Heart left ventricle (tissue), 16 donors: ENCODE measurements at regions of chr2 and their contacts with region 1.

Region 1: DNA sequence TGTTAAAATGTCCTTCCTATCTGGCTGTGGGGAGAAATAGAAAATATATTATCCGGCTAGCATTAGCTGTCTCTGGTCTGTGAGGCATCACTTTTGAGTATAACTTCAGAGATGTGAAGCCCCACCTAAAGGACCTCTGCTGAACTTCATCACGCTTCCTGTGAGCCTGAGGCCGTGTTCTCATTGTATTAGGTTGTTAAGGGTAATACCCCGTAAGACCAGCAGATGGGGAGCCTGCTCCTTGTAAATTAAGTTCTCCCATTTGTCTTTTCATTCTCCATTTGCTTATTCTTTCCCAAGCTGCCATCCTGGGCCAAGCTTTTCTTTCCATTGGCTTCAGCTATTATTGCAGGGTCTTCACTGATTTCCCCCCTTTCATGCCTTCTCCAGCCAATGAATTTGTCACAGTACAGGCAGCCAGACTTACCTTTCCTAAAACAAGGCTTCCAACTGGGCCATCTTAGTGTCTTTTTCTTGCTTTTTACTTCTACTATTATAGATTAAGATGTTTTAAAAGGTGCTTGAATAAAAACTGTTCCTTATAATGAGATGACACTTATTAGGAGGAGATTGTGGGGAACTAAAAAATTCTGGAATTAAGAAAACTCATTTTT is 12.4 kb downstream of the NIF3L1 start:
- DNase-seq: peak in 3 of 5 donors; percentile 43 to 67 (median 56)
- ATAC-seq: peak; percentile 61 to 88 (median 84)
- H3K4me3 ChIP-seq: no peak overlapping the region
- H3K27ac ChIP-seq: peak overlapping the region in 1 of 12 donors; percentile 9
- H3K4me1 ChIP-seq: peaks cover 0 to 21% (median 2%) of the 10 kb centered on the region in 12 donors
- H3K27me3 ChIP-seq: no peaks in the 10 kb centered on the region
- CTCF ChIP-seq: peak; percentile 61 to 82 (median 76)
- POLR2A ChIP-seq: no peak

Region 2: DNA sequence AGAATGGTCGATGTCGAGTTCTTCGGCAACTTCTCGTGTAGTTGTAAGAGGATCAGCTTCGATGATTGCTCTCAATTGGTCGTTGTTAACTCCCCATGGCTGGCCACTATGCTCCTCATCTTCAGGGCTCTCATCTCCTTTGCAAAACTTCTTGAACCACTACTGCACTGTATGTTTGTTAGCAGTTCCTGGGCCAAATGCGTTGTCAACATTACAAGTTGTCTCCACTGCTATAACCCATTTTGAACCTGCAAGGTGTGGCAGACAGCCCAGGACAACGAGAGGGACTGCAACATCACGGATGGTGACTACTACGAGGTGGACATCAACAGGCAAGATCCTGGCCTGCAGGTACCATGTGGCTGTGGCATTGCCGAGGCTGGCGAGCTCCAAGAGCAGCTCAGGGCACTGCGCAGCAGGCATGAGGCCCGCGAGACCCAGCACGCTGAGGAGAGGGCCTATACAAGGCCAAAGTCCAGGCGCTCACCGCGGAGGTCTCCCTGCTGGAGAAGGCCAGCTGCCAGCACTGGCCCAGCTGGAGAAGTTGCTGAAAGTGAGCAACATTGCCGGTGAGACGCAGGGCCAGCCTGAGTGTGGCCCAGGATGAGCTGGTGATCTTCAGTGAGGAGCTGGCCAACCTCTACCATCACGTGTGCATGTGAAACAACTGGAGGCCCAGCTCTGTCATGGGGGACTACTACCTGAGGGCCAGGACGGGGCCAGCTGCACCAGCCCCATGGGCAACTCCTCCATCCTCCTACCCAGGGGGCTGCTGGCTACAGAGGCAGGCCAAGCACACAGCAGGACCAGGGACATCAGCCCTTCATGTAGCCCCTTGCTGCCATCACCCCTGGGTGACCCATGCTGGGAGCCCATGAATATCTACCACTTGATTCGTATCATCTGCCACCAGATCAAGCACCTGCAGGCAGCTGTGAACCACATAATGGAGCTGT is 57.3 kb before region 1 on chr2:
- intact Hi-C with region 1: no loop called
- DNase-seq: no peak
- ATAC-seq: peak in 2 of 4 donors; percentile 9 to 12
- H3K4me3 ChIP-seq: no peak overlapping the region
- H3K27ac ChIP-seq: no peak overlapping the region
- H3K4me1 ChIP-seq: no peaks in the 10 kb centered on the region
- H3K27me3 ChIP-seq: no peaks in the 10 kb centered on the region
- CTCF ChIP-seq: no peak
- POLR2A ChIP-seq: no peak

Region 3: GRCh38 chr2:200864176-200864976 is 37.2 kb before region 1 on chr2 and contains the start of gene CLK1:
- intact Hi-C with region 1: no loop called
- DNase-seq: peak; percentile 97 to 99 (median 98)
- ATAC-seq: peak; percentile 88 to 95 (median 94)
- H3K4me3 ChIP-seq: peak within 1 kb of the TSS; percentile 67 to 100 (median 96)
- H3K27ac ChIP-seq: peak within 1 kb of the TSS; percentile 98 to 100 (median 100)
- H3K4me1 ChIP-seq: peaks cover 0 to 52% (median 25%) of the 10 kb centered on the region in 12 donors
- H3K27me3 ChIP-seq: no peaks in the 10 kb centered on the region
- CTCF ChIP-seq: no peak
- POLR2A ChIP-seq: peak; percentile 87 to 99
- total RNA-seq, gene CLK1: 28.6 to 59.5 (median 39.0) TPM

Region 4: DNA sequence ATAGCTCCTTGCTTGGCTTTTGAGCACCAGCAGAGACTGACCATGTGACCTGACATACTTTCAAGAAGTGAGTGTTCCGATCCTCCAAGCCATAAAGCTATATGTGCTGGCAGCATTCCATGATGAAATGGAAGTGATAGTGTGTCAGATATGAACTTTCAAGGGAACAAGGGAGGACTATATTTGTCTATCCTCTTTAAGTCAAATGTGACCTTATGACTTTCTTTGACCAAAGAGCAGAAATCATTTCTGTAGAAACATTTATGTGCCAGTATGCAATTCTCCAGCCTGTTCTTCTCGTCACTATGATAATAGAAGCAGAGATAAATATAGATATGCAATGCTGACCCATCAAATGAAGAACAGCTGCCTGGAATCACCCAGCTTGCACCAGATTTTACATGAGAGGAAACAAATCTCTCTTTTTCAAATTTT is 155.5 kb after region 1 on chr2:
- intact Hi-C with region 1: loop called in 1 of 10 experiments (anchors 10 kb)
- DNase-seq: no peak
- ATAC-seq: peak in 1 of 4 donors; percentile 14
- H3K4me3 ChIP-seq: no peak overlapping the region
- H3K27ac ChIP-seq: peak overlapping the region in 2 of 12 donors; percentile 16 to 47
- H3K4me1 ChIP-seq: peaks cover 0 to 52% (median 17%) of the 10 kb centered on the region in 12 donors
- H3K27me3 ChIP-seq: no peaks in the 10 kb centered on the region
- CTCF ChIP-seq: no peak
- POLR2A ChIP-seq: no peak

Region 5: GRCh38 chr2:201064797-201065329 is 163.3 kb after region 1 on chr2:
- intact Hi-C with region 1: loop called (anchors 2 to 10 kb)
- DNase-seq: no peak
- ATAC-seq: no peak
- H3K4me3 ChIP-seq: no peak overlapping the region
- H3K27ac ChIP-seq: no peak overlapping the region
- H3K4me1 ChIP-seq: peaks cover 0 to 53% (median 23%) of the 10 kb centered on the region in 12 donors
- H3K27me3 ChIP-seq: no peaks in the 10 kb centered on the region
- CTCF ChIP-seq: no peak
- POLR2A ChIP-seq: no peak

Region 6: DNA sequence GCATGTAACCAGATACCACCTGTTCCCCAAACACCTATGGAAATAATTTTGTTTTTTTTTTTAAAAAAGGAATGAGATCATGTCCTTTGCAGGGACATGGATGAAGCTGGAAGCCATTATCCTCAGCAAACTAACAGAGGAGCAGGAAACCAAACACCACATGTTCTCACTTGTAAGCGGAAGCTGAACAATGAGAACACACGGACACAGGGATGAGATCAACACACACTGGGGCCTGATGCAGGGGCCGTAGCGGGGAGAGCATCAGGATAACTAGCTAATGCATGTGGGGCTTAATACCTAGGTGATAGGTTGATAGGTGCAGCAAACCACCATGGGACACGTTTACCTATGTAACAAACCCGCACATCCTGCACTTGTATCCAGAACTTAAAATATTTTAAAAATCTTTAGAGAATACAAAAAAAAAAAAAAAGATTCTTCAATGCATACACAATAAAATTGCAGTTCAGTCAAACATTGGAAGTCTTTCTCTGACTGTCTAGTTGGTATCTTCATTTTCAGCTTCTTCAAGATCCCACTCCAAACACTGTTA is 269.8 kb after region 1 on chr2:
- intact Hi-C with region 1: loop called in 9 of 10 experiments (anchors 2 to 5 kb)
- DNase-seq: no peak
- ATAC-seq: peak in 1 of 4 donors; percentile 19
- H3K4me3 ChIP-seq: no peak overlapping the region
- H3K27ac ChIP-seq: no peak overlapping the region
- H3K4me1 ChIP-seq: peaks cover 0 to 12% (median 0%) of the 10 kb centered on the region in 12 donors
- H3K27me3 ChIP-seq: no peaks in the 10 kb centered on the region
- CTCF ChIP-seq: no peak
- POLR2A ChIP-seq: no peak

Region 7: GRCh38 chr2:201182650-201183364 is 281.2 kb after region 1 on chr2 and contains the start of gene CASP10:
- intact Hi-C with region 1: loop called in 6 of 10 experiments (anchors 2 to 5 kb)
- DNase-seq: peak in 1 of 5 donors; percentile 23
- ATAC-seq: peak; percentile 52 to 88 (median 74)
- H3K4me3 ChIP-seq: peak within 1 kb of the TSS; percentile 12 to 73 (median 61)
- H3K27ac ChIP-seq: peak within 1 kb of the TSS; percentile 33 to 92 (median 74)
- H3K4me1 ChIP-seq: peaks cover 0 to 49% (median 1%) of the 10 kb centered on the region in 12 donors
- H3K27me3 ChIP-seq: no peaks in the 10 kb centered on the region
- CTCF ChIP-seq: peak in 11 of 12 donors; percentile 2 to 69 (median 53)
- POLR2A ChIP-seq: peak in 1 of 2 donors; percentile 42
- total RNA-seq, gene CASP10: 4.3 to 24.0 (median 5.8) TPM

Region 8: GRCh38 chr2:201363857-201364560 is 462.4 kb after region 1 on chr2:
- intact Hi-C with region 1: loop called in 2 of 10 experiments (anchors 10 kb)
- DNase-seq: no peak
- ATAC-seq: peak in 3 of 4 donors; percentile 62 to 65 (median 64)
- H3K4me3 ChIP-seq: no peak overlapping the region
- H3K27ac ChIP-seq: no peak overlapping the region
- H3K4me1 ChIP-seq: peaks cover 0 to 10% (median 0%) of the 10 kb centered on the region in 12 donors
- H3K27me3 ChIP-seq: no peaks in the 10 kb centered on the region
- CTCF ChIP-seq: peak; percentile 64 to 85 (median 78)
- POLR2A ChIP-seq: no peak